Activated B cell treated with CpG ODN at 0.5 μM for 24 hours (primary cell): ENCODE measurements at regions of chr6 and their contacts with region 1.

Region 1: GRCh38 chr6:118735320-118735719 is 83.9 kb upstream of the CEP85L start:
- DNase-seq: no peak
- ATAC-seq: peak; percentile 49
- H3K4me3 Mint-ChIP-seq: no peak overlapping the region
- H3K27ac Mint-ChIP-seq: no peak overlapping the region
- H3K4me1 Mint-ChIP-seq: peaks cover 3% of the 10 kb centered on the region
- H3K27me3 Mint-ChIP-seq: no peaks in the 10 kb centered on the region
- CTCF ChIP-seq: no peak

Region 2: GRCh38 chr6:118697554-118697953 is 37.8 kb before region 1 on chr6:
- CTCF ChIA-PET with region 1: interaction called, 5 read pairs
- POLR2A ChIA-PET with region 1: no interaction called
- intact Hi-C with region 1: loop called (anchors 5 kb)
- DNase-seq: no peak
- ATAC-seq: no peak
- H3K4me3 Mint-ChIP-seq: no peak overlapping the region
- H3K27ac Mint-ChIP-seq: no peak overlapping the region
- H3K4me1 Mint-ChIP-seq: peaks cover 55% of the 10 kb centered on the region
- H3K27me3 Mint-ChIP-seq: no peaks in the 10 kb centered on the region
- CTCF ChIP-seq: no peak

Region 3: GRCh38 chr6:119060255-119060907 is 325.1 kb after region 1 on chr6:
- CTCF ChIA-PET with region 1: no interaction called
- POLR2A ChIA-PET with region 1: no interaction called
- intact Hi-C with region 1: no loop called
- DNase-seq: no peak
- ATAC-seq: no peak
- H3K4me3 Mint-ChIP-seq: no peak overlapping the region
- H3K27ac Mint-ChIP-seq: no peak overlapping the region
- H3K4me1 Mint-ChIP-seq: peaks cover 5% of the 10 kb centered on the region
- H3K27me3 Mint-ChIP-seq: peaks cover 2% of the 10 kb centered on the region
- CTCF ChIP-seq: no peak

Region 4: GRCh38 chr6:120493483-120493882 is 1758.2 kb after region 1 on chr6:
- CTCF ChIA-PET with region 1: no interaction called
- POLR2A ChIA-PET with region 1: no interaction called
- intact Hi-C with region 1: no loop called
- DNase-seq: no peak
- ATAC-seq: no peak
- H3K4me3 Mint-ChIP-seq: no peak overlapping the region
- H3K27ac Mint-ChIP-seq: no peak overlapping the region
- H3K4me1 Mint-ChIP-seq: no peaks in the 10 kb centered on the region
- H3K27me3 Mint-ChIP-seq: no peaks in the 10 kb centered on the region
- CTCF ChIP-seq: no peak